Activated B cell treated with CpG ODN at 0.5 μM for 24 hours (primary cell): ENCODE measurements at regions of chr7 and their contacts with region 1.

Region 1: DNA sequence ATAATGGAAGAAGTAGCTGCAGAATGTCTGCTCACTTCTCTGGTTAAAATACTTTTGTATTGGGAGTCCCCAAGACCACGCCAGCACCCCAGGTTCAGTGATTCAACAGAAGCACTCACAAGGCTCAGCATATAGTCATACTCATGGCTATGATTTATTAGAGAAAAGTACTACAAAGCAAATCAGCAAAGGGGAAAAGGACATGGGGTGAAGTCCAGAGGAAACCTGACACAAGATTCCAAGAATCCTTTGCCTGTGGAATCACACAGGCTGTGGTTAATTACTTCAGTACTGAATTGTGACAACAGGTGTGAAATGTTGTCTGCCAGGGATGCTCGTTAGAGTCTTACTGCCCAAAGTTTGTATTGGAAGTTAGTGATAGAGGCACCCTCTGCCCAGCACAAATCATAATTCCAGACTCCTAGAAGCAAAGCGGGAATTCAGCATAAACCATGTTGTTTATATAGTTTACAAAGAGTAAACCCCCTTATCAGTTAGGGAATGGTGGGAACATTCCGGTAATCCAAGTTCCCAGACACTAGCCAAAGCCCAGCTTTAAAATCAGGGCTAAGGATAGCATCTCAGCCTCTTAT is 79.4 kb downstream of the HYCC1 start:
- DNase-seq: no peak
- ATAC-seq: no peak
- H3K4me3 Mint-ChIP-seq: no peak overlapping the region
- H3K27ac Mint-ChIP-seq: no peak overlapping the region
- H3K4me1 Mint-ChIP-seq: no peaks in the 10 kb centered on the region
- H3K27me3 Mint-ChIP-seq: no peaks in the 10 kb centered on the region
- CTCF ChIP-seq: no peak

Region 2: DNA sequence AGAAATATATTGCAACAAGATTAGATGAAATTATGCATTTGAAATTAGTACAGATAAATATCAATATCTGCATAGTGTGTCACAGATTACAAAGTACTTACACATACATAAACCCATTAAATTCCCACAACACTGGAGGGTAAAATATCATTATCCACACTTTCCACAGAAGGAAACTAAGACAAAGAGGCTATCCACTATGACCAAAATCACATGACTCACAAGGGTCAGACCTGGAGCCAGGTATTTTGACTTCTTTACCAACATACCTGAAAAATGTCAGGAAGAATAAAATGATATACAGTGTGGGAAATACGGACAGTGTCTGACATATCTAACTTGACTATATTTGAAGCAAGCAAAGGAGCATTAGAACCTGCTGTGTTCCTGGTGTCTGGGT is 45.3 kb after region 1 on chr7:
- CTCF ChIA-PET with region 1: no interaction called
- POLR2A ChIA-PET with region 1: no interaction called
- intact Hi-C with region 1: loop called (anchors 5 kb)
- DNase-seq: no peak
- ATAC-seq: no peak
- H3K4me3 Mint-ChIP-seq: no peak overlapping the region
- H3K27ac Mint-ChIP-seq: no peak overlapping the region
- H3K4me1 Mint-ChIP-seq: no peaks in the 10 kb centered on the region
- H3K27me3 Mint-ChIP-seq: no peaks in the 10 kb centered on the region
- CTCF ChIP-seq: no peak